Activated CD8-positive, alpha-beta T cell treated with anti-CD3 and anti-CD28 coated beads, Interleukin-2, amount 10 ng/mL, durations not matched to agents 7 days and 5 days (primary cell): ENCODE measurements at regions of chr7 and their contacts with region 1.

Region 1: DNA sequence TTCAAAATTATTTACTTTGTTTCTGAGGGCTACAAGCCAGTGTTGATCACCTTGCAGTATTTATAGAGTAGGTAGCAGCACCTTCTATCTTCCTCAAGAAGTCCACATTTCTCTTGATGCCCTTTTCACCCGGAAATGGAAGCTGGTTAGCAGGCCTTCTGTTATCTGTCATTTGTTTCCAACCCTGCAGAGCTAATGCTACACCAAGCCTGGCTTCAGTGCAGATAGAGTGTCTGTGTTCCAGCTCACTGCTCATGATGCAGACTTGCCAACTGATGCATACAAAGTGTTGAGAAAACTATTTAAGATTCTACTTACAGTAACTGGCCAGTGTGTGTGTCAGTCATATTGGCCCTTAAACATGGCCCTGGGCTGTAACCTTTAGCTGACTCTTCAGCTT is 301.0 kb downstream of the LHFPL3 start:
- DNase-seq: no peak
- ATAC-seq: no peak
- H3K4me3 Mint-ChIP-seq: no peak overlapping the region
- H3K27ac Mint-ChIP-seq: no peak overlapping the region
- H3K4me1 Mint-ChIP-seq: no peaks in the 10 kb centered on the region
- H3K27me3 Mint-ChIP-seq: peaks cover 3% of the 10 kb centered on the region

Region 2: DNA sequence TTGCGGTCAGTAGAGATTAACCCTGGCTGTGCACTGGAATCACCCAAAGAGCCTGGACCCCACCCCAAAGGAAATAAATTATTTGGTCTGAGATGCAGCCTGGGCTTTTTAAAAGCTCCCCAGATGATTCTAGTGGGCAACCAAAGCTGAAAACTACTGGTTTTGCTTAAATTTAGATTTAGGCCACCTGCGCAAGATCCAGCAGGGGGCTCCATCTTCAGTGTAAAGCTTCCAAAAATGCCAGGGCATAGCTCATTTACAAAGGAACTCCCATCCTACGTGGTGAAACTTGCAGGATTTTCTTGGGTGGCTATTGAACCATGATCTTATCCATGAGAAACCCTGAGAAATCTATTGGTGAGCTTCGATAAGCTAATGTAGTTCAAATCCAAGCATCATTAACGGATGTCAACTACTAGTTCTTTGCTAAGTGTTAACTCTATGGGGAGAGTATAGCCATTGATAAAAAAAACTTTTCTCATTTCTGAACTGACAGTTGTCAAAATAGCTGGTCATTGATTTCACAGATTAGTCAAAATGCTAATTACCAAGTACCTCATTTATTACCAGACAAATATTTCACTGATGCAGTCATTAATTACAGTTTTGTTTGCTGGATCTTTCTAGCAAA is 14.3 kb after region 1 on chr7:
- CTCF ChIA-PET with region 1: interaction called, 14 read pairs
- POLR2A ChIA-PET with region 1: no interaction called
- DNase-seq: no peak
- ATAC-seq: no peak
- H3K4me3 Mint-ChIP-seq: no peak overlapping the region
- H3K27ac Mint-ChIP-seq: no peak overlapping the region
- H3K4me1 Mint-ChIP-seq: no peaks in the 10 kb centered on the region
- H3K27me3 Mint-ChIP-seq: no peaks in the 10 kb centered on the region